Thyroid gland (tissue), 4 donors: ENCODE measurements at regions of chr5 and their contacts with region 1.

Region 1: GRCh38 chr5:129481161-129481560 is 21.1 kb downstream of the ADAMTS19 start:
- DNase-seq: no peak
- H3K4me3 ChIP-seq: no peak overlapping the region
- H3K27ac ChIP-seq: no peak overlapping the region
- H3K4me1 ChIP-seq: no peaks in the 10 kb centered on the region
- H3K27me3 ChIP-seq: no peaks in the 10 kb centered on the region
- CTCF ChIP-seq: no peak
- POLR2A ChIP-seq: no peak

Region 2: GRCh38 chr5:129367883-129368282 is 113.3 kb before region 1 on chr5:
- intact Hi-C with region 1: no loop called
- DNase-seq: no peak
- H3K4me3 ChIP-seq: no peak overlapping the region
- H3K27ac ChIP-seq: no peak overlapping the region
- H3K4me1 ChIP-seq: no peaks in the 10 kb centered on the region
- H3K27me3 ChIP-seq: no peaks in the 10 kb centered on the region
- CTCF ChIP-seq: no peak
- POLR2A ChIP-seq: no peak

Region 3: DNA sequence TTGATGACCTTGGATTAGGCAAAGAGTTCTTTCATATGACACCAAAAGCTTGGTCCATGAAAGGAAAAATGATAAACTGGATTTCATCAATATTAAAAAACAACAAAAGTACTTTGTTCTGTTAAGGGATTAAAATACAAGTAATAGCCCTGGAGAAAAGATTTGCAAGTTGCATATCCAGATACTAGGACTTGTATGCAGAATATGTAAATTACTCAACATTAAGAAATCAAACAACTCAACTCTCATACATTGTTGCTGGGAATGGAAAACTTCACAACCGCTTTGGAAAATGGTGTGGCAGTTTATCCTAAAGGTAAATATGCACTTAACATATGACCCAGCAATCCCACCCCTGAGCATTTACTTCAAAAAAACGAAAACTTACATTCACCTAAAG is 90.9 kb after region 1 on chr5:
- intact Hi-C with region 1: loop called (anchors 5 kb)
- DNase-seq: no peak
- H3K4me3 ChIP-seq: no peak overlapping the region
- H3K27ac ChIP-seq: no peak overlapping the region
- H3K4me1 ChIP-seq: no peaks in the 10 kb centered on the region
- H3K27me3 ChIP-seq: no peaks in the 10 kb centered on the region
- CTCF ChIP-seq: no peak
- POLR2A ChIP-seq: no peak

Region 4: DNA sequence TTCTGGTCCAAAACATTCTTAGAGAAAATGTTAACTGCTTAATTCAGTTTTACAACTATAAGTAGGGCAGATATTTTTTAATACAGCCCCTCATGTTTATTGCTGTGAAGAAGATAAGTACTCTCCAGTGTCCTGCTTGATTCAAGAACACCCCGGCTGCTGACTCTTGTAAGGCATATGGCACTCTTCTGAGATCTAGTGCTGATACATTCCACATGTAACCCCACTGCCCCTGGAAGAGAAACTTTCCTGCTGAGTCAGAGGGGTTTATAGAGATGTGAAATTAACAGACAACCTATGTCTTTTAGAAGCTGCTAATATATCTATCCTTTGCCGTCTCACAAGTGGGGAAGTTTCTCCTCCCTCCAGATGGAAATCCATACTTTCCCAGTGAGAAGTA is 265.7 kb after region 1 on chr5:
- intact Hi-C with region 1: no loop called
- DNase-seq: no peak
- H3K4me3 ChIP-seq: no peak overlapping the region
- H3K27ac ChIP-seq: no peak overlapping the region
- H3K4me1 ChIP-seq: no peaks in the 10 kb centered on the region
- H3K27me3 ChIP-seq: no peaks in the 10 kb centered on the region
- CTCF ChIP-seq: no peak
- POLR2A ChIP-seq: no peak